ENCODE measurements at regions of chr7 and their contacts with region 1.

Region 1: DNA sequence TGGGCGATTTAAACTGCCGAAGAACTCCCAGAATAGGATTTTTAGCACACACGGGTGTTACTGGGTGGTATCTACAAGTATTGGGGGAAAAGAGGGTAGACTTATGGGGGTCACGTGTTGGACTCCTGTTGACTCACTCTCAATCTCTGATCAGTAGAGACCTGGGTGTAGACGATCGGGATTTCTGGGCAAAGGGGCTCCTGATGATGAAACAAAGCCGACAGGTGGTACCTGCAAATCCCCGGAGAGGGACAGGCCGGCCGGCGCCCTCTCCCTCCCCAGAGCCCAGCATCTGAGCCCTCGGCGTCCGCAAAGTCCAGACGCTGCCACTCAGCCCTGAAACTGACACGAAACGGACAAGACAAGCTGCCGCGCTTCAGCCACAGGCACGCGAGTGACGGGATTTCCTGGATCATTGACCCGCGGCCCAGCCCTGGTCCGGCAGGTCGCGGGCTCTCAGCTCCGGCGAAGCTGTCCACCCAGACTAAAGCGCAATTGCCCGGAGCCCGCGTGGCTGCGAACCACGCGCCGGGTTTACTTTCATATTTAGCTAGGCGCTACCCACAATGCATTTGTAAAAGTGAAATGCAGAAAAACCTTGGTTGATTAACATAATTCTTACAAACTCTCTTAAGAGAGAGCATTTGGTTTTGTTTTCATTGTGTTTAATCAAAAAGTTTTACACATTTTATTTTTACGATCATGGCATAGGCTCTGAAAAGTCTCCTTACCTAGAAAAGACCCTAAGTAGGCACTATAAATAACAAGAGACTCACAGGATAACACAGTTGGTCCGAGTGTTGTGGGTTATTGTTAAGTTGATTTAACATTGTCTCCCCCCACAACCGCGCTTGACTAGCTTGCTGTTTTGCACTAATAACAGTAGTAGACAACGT is 56.9 kb upstream of the EZH2 start:
- DNase-seq: peak; percentile 68
- ATAC-seq: peak; percentile 77
- H3K4me3 Mint-ChIP-seq: peak overlapping the region; percentile 97
- H3K27ac Mint-ChIP-seq: peak overlapping the region; percentile 99
- H3K4me1 Mint-ChIP-seq: peaks cover 17% of the 10 kb centered on the region
- H3K27me3 Mint-ChIP-seq: no peaks in the 10 kb centered on the region
- CTCF ChIP-seq: no peak

Region 2: GRCh38 chr7:148527707-148528168 is 413.2 kb before region 1 on chr7:
- CTCF ChIA-PET with region 1: no interaction called
- POLR2A ChIA-PET with region 1: no interaction called
- intact Hi-C with region 1: loop called (anchors 2 kb)
- DNase-seq: peak; percentile 54
- ATAC-seq: peak; percentile 94
- H3K4me3 Mint-ChIP-seq: no peak overlapping the region
- H3K27ac Mint-ChIP-seq: no peak overlapping the region
- H3K4me1 Mint-ChIP-seq: peaks cover 28% of the 10 kb centered on the region
- H3K27me3 Mint-ChIP-seq: no peaks in the 10 kb centered on the region
- CTCF ChIP-seq: peak; percentile 25

Region 3: GRCh38 chr7:148898845-148899484 is 42.0 kb before region 1 on chr7:
- CTCF ChIA-PET with region 1: no interaction called
- POLR2A ChIA-PET with region 1: no interaction called
- intact Hi-C with region 1: loop called (anchors 5 kb)
- DNase-seq: no peak
- ATAC-seq: no peak
- H3K4me3 Mint-ChIP-seq: no peak overlapping the region
- H3K27ac Mint-ChIP-seq: no peak overlapping the region
- H3K4me1 Mint-ChIP-seq: no peaks in the 10 kb centered on the region
- H3K27me3 Mint-ChIP-seq: peaks cover 4% of the 10 kb centered on the region
- CTCF ChIP-seq: no peak

Region 4: GRCh38 chr7:148962823-148963582 is 22.1 kb after region 1 on chr7:
- CTCF ChIA-PET with region 1: interaction called, 5 read pairs
- POLR2A ChIA-PET with region 1: interaction called, 14 read pairs
- intact Hi-C with region 1: loop called (anchors 1 kb)
- DNase-seq: no peak
- ATAC-seq: peak; percentile 53
- H3K4me3 Mint-ChIP-seq: peak overlapping the region; percentile 93
- H3K27ac Mint-ChIP-seq: peak overlapping the region; percentile 87
- H3K4me1 Mint-ChIP-seq: peaks cover 29% of the 10 kb centered on the region
- H3K27me3 Mint-ChIP-seq: no peaks in the 10 kb centered on the region
- CTCF ChIP-seq: no peak

Region 5: GRCh38 chr7:149028346-149029109 is 87.6 kb after region 1 on chr7 and contains the start of gene PDIA4:
- CTCF ChIA-PET with region 1: no interaction called
- POLR2A ChIA-PET with region 1: no interaction called
- intact Hi-C with region 1: loop called (anchors 1 kb)
- DNase-seq: peak; percentile 99
- ATAC-seq: peak; percentile 87
- H3K4me3 Mint-ChIP-seq: peak within 1 kb of the TSS; percentile 92
- H3K27ac Mint-ChIP-seq: peak within 1 kb of the TSS; percentile 89
- H3K4me1 Mint-ChIP-seq: peaks cover 39% of the 10 kb centered on the region
- H3K27me3 Mint-ChIP-seq: no peaks in the 10 kb centered on the region
- CTCF ChIP-seq: no peak
- total RNA-seq, gene PDIA4: 57.4 and 59.4 TPM in 2 replicates

Measured in activated B cell treated with CpG ODN at 0.5 μM for 24 hours (primary cell).